ENCODE measurements at regions of chr16 and their contacts with region 1.

Region 1: DNA sequence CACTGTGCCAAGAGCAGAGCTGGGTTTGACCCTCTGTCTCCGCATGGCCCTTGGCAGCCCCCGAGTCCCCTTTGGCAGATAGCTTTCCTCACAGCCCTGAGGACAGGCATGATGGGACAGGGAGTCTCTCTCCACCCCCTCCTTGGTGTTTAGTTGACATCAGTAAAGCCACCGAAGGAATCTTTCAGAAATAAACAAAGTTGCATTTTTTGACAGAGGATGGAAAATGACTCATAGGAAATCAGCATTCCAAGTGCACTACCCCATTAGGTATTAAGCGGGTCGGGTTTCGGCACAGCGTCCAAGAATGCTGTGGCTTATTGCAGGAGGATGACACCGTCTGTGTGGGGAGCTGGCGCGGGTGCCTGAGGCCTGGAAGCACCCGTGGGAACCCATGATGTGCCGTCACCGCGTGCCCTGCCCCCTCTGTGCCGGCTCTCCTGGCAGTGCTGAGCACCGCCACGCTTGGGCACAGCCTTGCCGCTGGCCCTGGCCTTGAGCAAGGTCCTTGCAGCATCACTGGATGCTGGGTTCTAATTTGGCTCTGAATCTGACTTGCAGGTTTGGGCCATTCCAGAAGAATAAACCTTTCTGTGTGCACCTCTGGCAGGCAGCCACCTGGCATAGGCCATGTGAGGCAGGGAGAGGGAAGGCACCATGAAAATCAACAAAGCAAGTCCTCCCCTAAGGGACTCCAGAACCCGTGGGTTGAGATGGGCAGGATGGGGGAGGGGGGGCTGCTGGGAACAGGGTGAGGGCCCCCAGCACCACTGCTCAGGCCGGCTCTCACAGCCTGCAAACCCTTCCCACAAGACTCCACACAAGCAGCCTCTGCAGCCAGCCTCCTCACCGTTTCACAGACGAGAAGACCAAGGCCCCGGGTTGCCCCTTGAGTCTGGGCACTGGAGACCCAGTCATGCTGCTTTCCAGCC is 50.5 kb upstream of the ZNF469 start:
- DNase-seq: peak; percentile 99
- H3K4me3 ChIP-seq: no peak overlapping the region
- CTCF ChIP-seq: no peak

Region 2: GRCh38 chr16:88306860-88307545 is 25.3 kb before region 1 on chr16:
- CTCF ChIA-PET with region 1: no interaction called
- POLR2A ChIA-PET with region 1: interaction called, 13 read pairs
- DNase-seq: peak; percentile 92
- H3K4me3 ChIP-seq: no peak overlapping the region
- CTCF ChIP-seq: no peak

Region 3: GRCh38 chr16:88477631-88478514 is 145.6 kb after region 1 on chr16:
- CTCF ChIA-PET with region 1: no interaction called
- POLR2A ChIA-PET with region 1: no interaction called
- DNase-seq: no peak
- H3K4me3 ChIP-seq: no peak overlapping the region
- CTCF ChIP-seq: no peak